Activated T-helper 1 cell treated with anti-CD3 and anti-CD28 coated beads, Interleukin-12 subunit alpha, Interleukin-12 subunit beta, Interleukin-2, Interleukin-4 antibody, amounts not matched to agents 30 ng/mL and 10 ng/mL and 1 ng/mL, durations not matched to agents 14 hours and 24 hours and 36 hours (primary cell): ENCODE measurements at regions of chr21 and their contacts with region 1.

Region 1: GRCh38 chr21:29245104-29245643 is 53.5 kb upstream of the BACH1 start:
- DNase-seq: no peak
- H3K4me3 Mint-ChIP-seq: no peak overlapping the region
- H3K27ac Mint-ChIP-seq: peak overlapping the region; percentile 49
- H3K4me1 Mint-ChIP-seq: peaks cover 9% of the 10 kb centered on the region
- H3K27me3 Mint-ChIP-seq: peaks cover 36% of the 10 kb centered on the region

Region 2: GRCh38 chr21:28992526-28993292 is 252.5 kb before region 1 on chr21 and contains the start of gene LTN1:
- intact Hi-C with region 1: no loop called
- DNase-seq: peak; percentile 98
- H3K4me3 Mint-ChIP-seq: peak within 1 kb of the TSS; percentile 97
- H3K27ac Mint-ChIP-seq: peak within 1 kb of the TSS; percentile 97
- H3K4me1 Mint-ChIP-seq: peaks cover 47% of the 10 kb centered on the region
- H3K27me3 Mint-ChIP-seq: no peaks in the 10 kb centered on the region
- total RNA-seq, gene LTN1: 25.6 and 28.4 TPM in 2 replicates

Region 3: DNA sequence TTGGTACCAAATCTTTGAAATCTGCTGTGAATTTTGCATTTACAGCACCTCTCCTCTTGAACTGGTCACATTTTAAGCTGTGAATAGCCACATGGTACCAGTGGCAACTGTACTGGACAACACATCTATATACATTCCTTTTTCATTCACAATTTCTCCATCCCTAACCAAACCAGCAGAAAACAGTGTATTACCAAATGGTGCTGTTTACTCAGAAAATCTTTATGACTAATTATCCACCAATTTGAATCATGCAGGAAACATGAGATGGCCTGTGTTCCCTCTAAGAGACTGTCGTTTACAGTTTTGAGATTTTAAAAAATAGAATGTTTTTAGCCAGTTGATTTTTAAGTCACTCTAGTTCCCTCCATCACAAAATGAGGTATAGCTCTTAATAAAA is 154.1 kb before region 1 on chr21:
- intact Hi-C with region 1: loop called (anchors 2 kb)
- DNase-seq: no peak
- H3K4me3 Mint-ChIP-seq: no peak overlapping the region
- H3K27ac Mint-ChIP-seq: peak overlapping the region; percentile 56
- H3K4me1 Mint-ChIP-seq: peaks cover 24% of the 10 kb centered on the region
- H3K27me3 Mint-ChIP-seq: peaks cover 13% of the 10 kb centered on the region

Region 4: DNA sequence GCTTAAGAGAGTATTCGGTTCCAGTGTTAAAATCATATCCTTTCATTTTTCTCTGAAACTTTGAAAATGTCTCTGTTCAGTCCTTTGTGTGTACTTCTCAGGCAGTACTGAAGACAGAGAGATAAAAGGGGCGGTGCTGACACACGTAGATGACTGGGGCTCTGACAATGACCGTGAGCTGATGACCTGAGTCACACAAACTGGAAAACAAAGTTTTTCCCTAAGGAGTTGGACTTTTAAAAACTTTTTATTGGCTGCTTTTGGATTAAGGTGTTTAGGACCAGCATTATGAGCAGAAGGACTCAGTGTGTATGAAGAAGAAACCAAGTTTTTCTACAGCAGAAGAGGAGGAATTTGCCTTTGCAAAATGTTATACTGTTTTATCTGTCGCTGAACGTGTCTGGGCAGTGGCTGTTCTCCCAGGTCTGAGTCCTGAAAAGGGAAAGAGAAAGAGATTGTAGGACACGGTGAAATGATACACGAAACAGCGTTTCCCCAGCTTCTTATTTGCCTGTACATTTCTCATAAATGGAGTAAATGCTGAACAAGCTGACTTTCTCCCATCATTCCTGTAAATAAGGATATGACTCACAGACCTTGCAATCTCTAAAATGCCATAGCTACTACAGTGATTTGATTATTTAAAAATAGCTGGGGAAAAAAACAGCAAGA is 63.2 kb before region 1 on chr21:
- intact Hi-C with region 1: loop called (anchors 5 kb)
- DNase-seq: no peak
- H3K4me3 Mint-ChIP-seq: peak overlapping the region; percentile 51
- H3K27ac Mint-ChIP-seq: peak overlapping the region; percentile 57
- H3K4me1 Mint-ChIP-seq: peaks cover 27% of the 10 kb centered on the region
- H3K27me3 Mint-ChIP-seq: no peaks in the 10 kb centered on the region

Region 5: GRCh38 chr21:29258626-29259335 is 13.6 kb after region 1 on chr21:
- intact Hi-C with region 1: loop called (anchors 1 kb)
- DNase-seq: no peak
- H3K4me3 Mint-ChIP-seq: no peak overlapping the region
- H3K27ac Mint-ChIP-seq: no peak overlapping the region
- H3K4me1 Mint-ChIP-seq: no peaks in the 10 kb centered on the region
- H3K27me3 Mint-ChIP-seq: peaks cover 23% of the 10 kb centered on the region

Region 6: GRCh38 chr21:29372063-29372802 is 127.1 kb after region 1 on chr21:
- intact Hi-C with region 1: loop called (anchors 5 kb)
- DNase-seq: peak; percentile 39
- H3K4me3 Mint-ChIP-seq: no peak overlapping the region
- H3K27ac Mint-ChIP-seq: no peak overlapping the region
- H3K4me1 Mint-ChIP-seq: peaks cover 30% of the 10 kb centered on the region
- H3K27me3 Mint-ChIP-seq: no peaks in the 10 kb centered on the region